Activated T-helper 1 cell treated with anti-CD3 and anti-CD28 coated beads, Interleukin-12 subunit alpha, Interleukin-12 subunit beta, Interleukin-2, Interleukin-4 antibody, amounts not matched to agents 30 ng/mL and 10 ng/mL and 1 ng/mL, durations not matched to agents 14 hours and 24 hours and 36 hours (primary cell): ENCODE measurements at regions of chr7 and their contacts with region 1.

Region 1: GRCh38 chr7:17234398-17235031 is 63.9 kb upstream of the AHR start:
- DNase-seq: peak; percentile 68
- H3K4me3 Mint-ChIP-seq: peak overlapping the region; percentile 82
- H3K27ac Mint-ChIP-seq: peak overlapping the region; percentile 97
- H3K4me1 Mint-ChIP-seq: peaks cover 63% of the 10 kb centered on the region
- H3K27me3 Mint-ChIP-seq: peaks cover 5% of the 10 kb centered on the region

Region 2: DNA sequence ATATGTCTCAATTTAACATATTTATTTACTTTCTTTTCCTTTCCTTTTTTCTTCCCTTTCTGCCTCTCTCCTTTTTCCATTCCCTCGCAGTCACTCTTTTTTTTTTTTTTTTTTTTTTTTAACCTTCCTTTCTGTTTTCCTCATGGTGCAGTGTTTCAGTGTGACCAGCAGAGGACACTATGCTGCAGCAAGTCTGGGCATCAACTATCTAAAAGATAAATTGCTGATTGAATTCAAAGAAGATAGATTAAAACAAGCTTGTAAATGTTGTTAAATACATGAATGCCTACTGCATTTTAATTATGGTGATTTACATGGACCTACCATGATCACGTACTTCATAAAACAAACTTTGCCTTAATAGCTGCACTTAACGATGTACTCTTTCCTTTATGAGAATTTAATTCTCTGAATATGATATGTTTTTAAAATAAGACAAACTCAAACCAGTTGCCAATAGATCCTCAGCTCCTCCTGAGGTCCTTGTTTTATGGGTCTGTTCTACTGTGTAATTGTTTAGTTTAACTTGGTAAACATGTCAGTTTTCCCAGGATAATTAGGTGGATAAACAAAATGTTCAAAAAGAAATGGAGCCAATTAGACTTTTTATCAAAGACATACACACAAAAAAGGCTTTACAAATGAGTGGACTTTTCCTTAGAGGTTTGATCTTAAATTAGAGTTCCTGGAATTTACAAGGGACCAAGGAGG is 251.7 kb before region 1 on chr7:
- intact Hi-C with region 1: loop called (anchors 1 kb)
- DNase-seq: no peak
- H3K4me3 Mint-ChIP-seq: no peak overlapping the region
- H3K27ac Mint-ChIP-seq: no peak overlapping the region
- H3K4me1 Mint-ChIP-seq: peaks cover 7% of the 10 kb centered on the region
- H3K27me3 Mint-ChIP-seq: peaks cover 18% of the 10 kb centered on the region

Region 3: GRCh38 chr7:17041324-17041723 is 193.2 kb before region 1 on chr7:
- intact Hi-C with region 1: loop called (anchors 1 kb)
- DNase-seq: no peak
- H3K4me3 Mint-ChIP-seq: no peak overlapping the region
- H3K27ac Mint-ChIP-seq: no peak overlapping the region
- H3K4me1 Mint-ChIP-seq: peaks cover 20% of the 10 kb centered on the region
- H3K27me3 Mint-ChIP-seq: peaks cover 6% of the 10 kb centered on the region

Region 4: GRCh38 chr7:17159500-17160037 is 74.9 kb before region 1 on chr7:
- intact Hi-C with region 1: loop called (anchors 1 kb)
- DNase-seq: no peak
- H3K4me3 Mint-ChIP-seq: no peak overlapping the region
- H3K27ac Mint-ChIP-seq: peak overlapping the region; percentile 55
- H3K4me1 Mint-ChIP-seq: peaks cover 30% of the 10 kb centered on the region
- H3K27me3 Mint-ChIP-seq: peaks cover 10% of the 10 kb centered on the region

Region 5: DNA sequence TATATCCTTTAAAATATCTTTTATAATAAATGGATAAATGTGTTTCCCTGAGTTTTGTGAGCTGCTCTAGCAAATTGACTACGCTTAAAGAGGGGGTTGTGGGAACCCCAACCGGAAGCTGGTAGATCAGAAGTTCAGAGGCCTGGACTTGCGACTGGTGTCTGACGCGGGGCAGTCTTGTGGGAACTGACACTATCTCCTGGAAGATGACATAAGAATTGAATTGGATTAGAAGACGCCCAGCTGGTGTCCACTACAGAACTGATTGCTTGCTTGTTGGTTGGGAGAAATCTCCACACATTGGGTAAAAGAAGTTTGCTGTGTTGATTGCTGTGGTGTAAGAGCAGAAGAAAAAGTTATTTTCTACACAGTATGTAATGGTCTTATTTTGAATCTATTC is 12.8 kb after region 1 on chr7:
- intact Hi-C with region 1: no loop called
- DNase-seq: no peak
- H3K4me3 Mint-ChIP-seq: no peak overlapping the region
- H3K27ac Mint-ChIP-seq: no peak overlapping the region
- H3K4me1 Mint-ChIP-seq: peaks cover 8% of the 10 kb centered on the region
- H3K27me3 Mint-ChIP-seq: no peaks in the 10 kb centered on the region

Region 6: DNA sequence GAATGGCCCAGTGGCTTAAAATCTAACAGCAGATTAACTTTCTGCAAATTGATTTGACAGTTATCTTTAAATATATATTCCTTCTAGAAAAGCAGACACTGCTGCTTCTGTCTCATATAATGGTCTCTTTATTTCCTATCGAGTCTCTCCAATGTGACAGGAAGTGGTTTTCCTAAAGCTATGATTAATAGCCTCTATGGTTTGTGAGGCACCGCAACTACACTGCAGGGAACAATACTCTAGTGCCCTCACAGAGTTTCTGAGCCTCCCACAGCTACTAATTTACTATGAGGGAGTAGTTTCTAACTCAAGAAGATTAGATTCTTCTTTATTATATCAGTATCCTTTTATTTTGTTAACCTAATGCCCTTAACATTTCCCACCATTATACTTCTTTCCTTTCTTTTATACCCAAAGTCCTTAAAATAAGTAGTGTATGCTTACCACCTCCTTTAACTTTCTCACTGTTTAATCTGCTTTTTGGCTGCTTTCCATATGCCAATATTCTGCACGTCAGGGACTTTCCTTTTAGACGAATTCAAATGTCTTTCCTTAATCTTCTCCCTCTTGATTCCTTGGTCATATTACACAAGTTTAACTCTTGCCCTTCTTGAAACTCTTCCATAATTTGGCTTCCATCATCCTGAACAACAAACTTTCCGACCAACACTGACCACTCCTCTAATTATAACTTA is 40.2 kb after region 1 on chr7:
- intact Hi-C with region 1: loop called (anchors 1 kb)
- DNase-seq: no peak
- H3K4me3 Mint-ChIP-seq: no peak overlapping the region
- H3K27ac Mint-ChIP-seq: no peak overlapping the region
- H3K4me1 Mint-ChIP-seq: peaks cover 18% of the 10 kb centered on the region
- H3K27me3 Mint-ChIP-seq: no peaks in the 10 kb centered on the region

Region 7: DNA sequence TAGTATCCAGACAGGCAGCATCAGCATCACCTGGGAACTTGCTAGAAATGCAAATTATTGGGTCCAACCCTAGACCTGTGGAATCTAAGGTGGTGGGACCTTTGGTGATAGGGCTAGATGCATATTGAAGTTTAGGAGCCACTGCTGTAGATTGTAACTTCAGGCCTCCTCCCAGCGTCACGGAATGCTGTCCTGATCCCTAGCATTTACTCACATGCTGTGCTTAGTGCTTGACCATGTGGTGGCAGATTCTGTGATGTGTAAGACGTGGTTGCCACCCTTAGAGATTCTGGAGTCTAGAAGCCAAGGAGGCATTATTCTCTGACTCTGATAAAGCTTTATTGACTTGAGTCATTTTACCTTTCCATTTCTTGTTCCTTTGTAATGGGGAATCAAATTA is 77.4 kb after region 1 on chr7:
- intact Hi-C with region 1: no loop called
- DNase-seq: no peak
- H3K4me3 Mint-ChIP-seq: no peak overlapping the region
- H3K27ac Mint-ChIP-seq: no peak overlapping the region
- H3K4me1 Mint-ChIP-seq: peaks cover 16% of the 10 kb centered on the region
- H3K27me3 Mint-ChIP-seq: no peaks in the 10 kb centered on the region